Aorta (tissue), 5 donors: ENCODE measurements at regions of chr11 and their contacts with region 1.

Region 1: GRCh38 chr11:108654994-108655631 is 9.8 kb upstream of the DDX10 start:
- DNase-seq: no peak
- ATAC-seq: no peak
- H3K4me3 ChIP-seq: no peak overlapping the region
- H3K27ac ChIP-seq: no peak overlapping the region
- H3K4me1 ChIP-seq: no peaks in the 10 kb centered on the region
- H3K27me3 ChIP-seq: no peaks in the 10 kb centered on the region

Region 2: DNA sequence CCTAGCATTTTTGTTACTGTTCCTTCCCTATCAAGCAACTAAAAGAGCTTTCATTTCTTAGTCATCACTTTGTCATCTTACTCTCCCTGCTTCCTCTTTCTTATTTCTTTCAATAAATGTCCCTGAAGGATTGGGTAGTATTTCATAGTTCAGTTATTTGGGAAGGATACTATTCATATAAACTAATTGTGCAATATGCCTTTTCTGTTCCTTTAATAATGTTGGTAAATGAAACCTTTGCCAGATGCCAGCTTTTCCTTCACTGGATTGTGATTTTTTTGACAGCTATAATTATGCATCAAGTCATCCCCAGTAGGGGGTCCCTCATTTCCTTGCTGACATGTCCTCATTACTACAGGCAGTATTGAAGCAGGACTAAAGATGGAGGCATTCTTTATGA is 330.5 kb before region 1 on chr11:
- intact Hi-C with region 1: loop called in 1 of 2 experiments (anchors 10 kb)
- DNase-seq: no peak
- ATAC-seq: no peak
- H3K4me3 ChIP-seq: no peak overlapping the region
- H3K27ac ChIP-seq: no peak overlapping the region
- H3K4me1 ChIP-seq: no peaks in the 10 kb centered on the region
- H3K27me3 ChIP-seq: no peaks in the 10 kb centered on the region